AG04450 (cell line): ENCODE measurements at regions of chr4 and their contacts with region 1.

Region 1: GRCh38 chr4:56435306-56435926 is at the start of gene PPAT:
- DNase-seq: peak; percentile 90
- H3K4me3 ChIP-seq: peak within 1 kb of the TSS; percentile 86
- H3K27ac ChIP-seq: peak within 1 kb of the TSS; percentile 87
- H3K27me3 ChIP-seq: no peaks in the 10 kb centered on the region
- CTCF ChIP-seq: peak; percentile 27; the same call in 1 of the 2 replicates
- polyA plus RNA-seq, gene PPAT: 9.8 and 11.6 TPM in 2 replicates

Region 2: DNA sequence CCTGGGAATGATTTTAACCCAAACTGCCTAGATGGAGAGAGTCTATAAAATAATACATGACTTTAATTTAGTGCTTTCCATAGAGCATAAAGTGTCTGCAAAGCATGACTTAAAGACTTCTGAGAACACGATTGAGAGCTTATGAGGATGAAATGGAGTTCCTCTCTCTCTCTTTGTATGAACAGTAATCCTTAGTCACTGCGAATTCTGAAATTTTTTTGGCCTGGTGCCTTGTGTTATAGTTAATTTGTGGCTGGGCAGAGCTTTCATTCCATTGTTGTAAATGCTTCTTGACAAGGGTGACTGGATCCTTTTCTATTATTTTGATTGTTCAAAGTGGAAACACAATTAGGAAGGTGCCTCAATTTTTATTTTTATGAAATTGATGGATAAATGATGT is 307.2 kb before region 1 on chr4:
- CTCF ChIA-PET with region 1: no interaction called
- POLR2A ChIA-PET with region 1: no interaction called
- DNase-seq: no peak
- H3K4me3 ChIP-seq: no peak overlapping the region
- H3K27ac ChIP-seq: no peak overlapping the region
- H3K27me3 ChIP-seq: peaks cover 2% of the 10 kb centered on the region
- CTCF ChIP-seq: no peak

Region 3: DNA sequence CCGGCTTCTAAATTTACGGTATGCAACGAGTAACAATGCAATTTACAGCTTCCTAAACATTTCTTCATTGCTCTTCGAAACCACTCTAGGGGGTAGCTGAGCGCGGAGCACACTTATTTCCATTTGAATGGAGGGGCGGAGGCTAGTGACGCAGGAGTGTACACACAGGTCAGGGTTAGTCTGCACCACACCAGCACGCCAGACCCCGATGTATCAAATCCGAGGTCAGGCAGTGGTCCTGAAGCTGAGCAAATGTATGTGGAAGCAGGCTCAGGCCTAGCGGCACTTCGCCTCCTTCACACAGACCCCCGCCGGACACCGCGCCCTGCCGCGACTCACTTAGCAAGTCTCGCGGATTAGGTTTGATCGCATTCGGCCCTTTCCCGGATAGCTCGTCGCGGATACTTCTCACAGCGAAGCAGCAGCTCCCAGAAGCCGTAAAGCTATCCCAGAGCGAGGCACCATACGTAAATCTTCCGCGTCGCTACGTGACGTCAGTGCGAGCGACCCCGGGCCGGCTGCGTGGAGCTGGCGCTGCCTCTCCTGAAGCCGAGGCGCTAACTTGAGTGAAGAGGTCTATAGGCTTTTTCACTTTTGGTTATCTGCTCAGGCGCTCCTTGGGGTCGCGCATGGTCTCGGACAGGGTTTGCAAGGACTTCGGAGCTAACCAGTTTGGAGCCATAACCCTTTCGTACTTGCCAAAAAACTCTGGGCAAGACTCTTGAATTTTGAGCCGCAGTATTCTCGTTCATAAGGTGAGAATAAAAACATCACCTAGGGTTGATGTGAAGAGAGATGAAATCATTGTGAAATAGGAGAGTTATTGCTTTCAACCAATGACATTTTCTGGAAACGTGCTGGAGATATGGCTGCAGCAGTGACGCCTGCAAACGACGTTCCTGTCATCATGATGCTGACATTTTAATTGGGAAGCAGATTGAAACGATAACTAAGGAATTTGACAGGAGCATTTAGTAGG is 48.1 kb before region 1 on chr4 and contains the start of gene AASDH:
- CTCF ChIA-PET with region 1: interaction called, 3 read pairs
- POLR2A ChIA-PET with region 1: interaction called, 28 read pairs
- DNase-seq: peak; percentile 83
- H3K4me3 ChIP-seq: peak within 1 kb of the TSS; percentile 89
- H3K27ac ChIP-seq: peak within 1 kb of the TSS; percentile 98
- H3K27me3 ChIP-seq: no peaks in the 10 kb centered on the region
- CTCF ChIP-seq: no peak
- polyA plus RNA-seq, gene AASDH: 10.0 and 14.8 TPM in 2 replicates

Region 4: GRCh38 chr4:56467284-56468096 is 32.1 kb after region 1 on chr4 and contains the start of gene SRP72:
- CTCF ChIA-PET with region 1: interaction called, 5 read pairs
- POLR2A ChIA-PET with region 1: interaction called, 33 read pairs
- DNase-seq: peak; percentile 63
- H3K4me3 ChIP-seq: peak within 1 kb of the TSS; percentile 95
- H3K27ac ChIP-seq: peak within 1 kb of the TSS; percentile 96
- H3K27me3 ChIP-seq: no peaks in the 10 kb centered on the region
- CTCF ChIP-seq: no peak
- polyA plus RNA-seq, gene SRP72: 134 and 176 TPM in 2 replicates

Region 5: DNA sequence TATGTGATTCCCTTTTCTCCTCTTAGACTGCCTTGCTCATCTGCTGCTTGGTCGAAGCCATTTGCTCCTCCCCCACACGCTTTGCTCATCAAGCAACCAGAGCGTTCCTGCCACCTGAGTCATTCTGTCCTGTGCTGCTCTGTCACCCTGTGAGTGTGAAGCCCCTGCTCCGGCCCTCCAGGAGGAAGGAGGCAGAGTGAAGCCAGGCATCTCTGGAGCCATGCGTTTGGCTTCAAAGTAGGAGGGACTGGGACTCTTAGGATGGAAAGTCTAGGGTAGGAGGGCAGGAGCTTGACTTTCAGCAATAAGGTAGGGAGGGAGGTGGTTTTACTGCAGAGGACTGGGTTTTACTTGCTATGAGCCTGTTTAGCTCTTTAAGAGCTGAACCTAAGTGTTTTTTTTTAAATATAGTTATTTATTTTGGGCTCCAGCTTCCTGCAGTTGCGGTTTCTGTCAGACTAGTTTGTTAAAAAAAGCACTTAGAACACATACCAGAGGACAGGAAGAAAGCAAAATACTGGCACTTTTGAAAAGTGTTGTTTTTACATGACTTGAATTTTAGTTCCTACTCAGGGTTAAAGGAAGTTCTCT is 322.5 kb after region 1 on chr4:
- CTCF ChIA-PET with region 1: no interaction called
- POLR2A ChIA-PET with region 1: no interaction called
- DNase-seq: peak; percentile 70
- H3K4me3 ChIP-seq: peak overlapping the region; percentile 25; the same call in 1 of the 2 replicates
- H3K27ac ChIP-seq: peak overlapping the region; percentile 82
- H3K27me3 ChIP-seq: no peaks in the 10 kb centered on the region
- CTCF ChIP-seq: no peak